Panc1 (cell line): ENCODE measurements at regions of chr17 and their contacts with region 1.

Region 1: DNA sequence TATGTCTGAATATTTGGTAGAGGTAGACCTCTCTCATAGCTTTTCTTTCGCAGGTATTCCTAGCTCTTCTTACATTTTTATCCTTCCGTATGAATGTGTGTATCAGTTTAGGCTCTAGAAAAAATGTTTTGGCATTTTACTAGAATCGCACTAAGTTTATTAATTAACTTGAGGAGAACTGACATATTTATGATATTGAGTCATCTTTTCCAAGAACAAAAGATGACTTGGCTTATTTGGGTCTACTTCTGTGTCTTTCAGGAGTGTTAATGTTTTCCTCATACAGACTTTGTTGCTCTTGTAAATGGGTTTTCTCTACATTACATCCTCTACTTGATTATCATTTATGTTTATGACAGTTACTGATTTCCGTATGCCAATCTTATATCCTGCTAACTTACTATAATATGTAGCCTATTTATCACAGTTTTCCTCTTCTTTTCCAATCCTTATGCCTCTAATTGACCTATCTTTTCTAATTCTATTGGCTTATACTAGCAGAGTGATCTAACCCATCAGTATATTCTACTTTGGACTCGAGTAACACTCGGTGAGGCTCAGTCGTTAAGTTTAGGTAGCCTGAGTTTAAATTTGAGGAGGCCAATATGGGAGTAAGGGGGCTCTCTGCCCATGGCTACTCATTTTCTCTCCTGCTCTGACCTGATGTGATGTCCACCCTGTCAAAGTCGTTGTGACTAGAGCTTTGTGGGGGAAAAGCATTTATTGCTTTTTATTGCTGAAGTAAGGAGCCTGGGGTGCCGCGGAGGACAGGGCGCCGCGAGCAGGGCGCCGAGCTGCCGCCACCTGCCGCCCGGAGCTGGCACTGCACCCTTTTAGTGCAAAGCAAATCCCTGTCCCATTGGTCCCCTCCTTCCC is 20.0 kb downstream of the ST6GALNAC1 start:
- DNase-seq: peak; percentile 30
- ATAC-seq: peak; percentile 96
- H3K4me3 ChIP-seq: peak overlapping the region in 1 of 2 experiments; percentile 29; a peak in 1 of 4 replicates
- H3K27ac ChIP-seq: peak overlapping the region; percentile 70; the same call in 1 of the 2 replicates
- H3K4me1 ChIP-seq: peaks cover 3% of the 10 kb centered on the region; the same call in 1 of the 2 replicates
- H3K27me3 ChIP-seq: no peaks in the 10 kb centered on the region; the same call in 1 of the 2 replicates
- CTCF ChIP-seq: peak; percentile 99

Region 2: GRCh38 chr17:76523084-76524037 is 100.1 kb before region 1 on chr17:
- CTCF ChIA-PET with region 1: no interaction called
- POLR2A ChIA-PET with region 1: interaction called, 3 read pairs
- in situ Hi-C with region 1: no loop called
- intact Hi-C with region 1: loop called (anchors 5 kb)
- DNase-seq: peak; percentile 46
- ATAC-seq: peak; percentile 85
- H3K4me3 ChIP-seq: peak overlapping the region in 1 of 2 experiments; percentile 17; a peak in 1 of 4 replicates
- H3K27ac ChIP-seq: no peak overlapping the region
- H3K4me1 ChIP-seq: peaks cover 19% of the 10 kb centered on the region
- H3K27me3 ChIP-seq: no peaks in the 10 kb centered on the region
- CTCF ChIP-seq: peak; percentile 100

Region 3: DNA sequence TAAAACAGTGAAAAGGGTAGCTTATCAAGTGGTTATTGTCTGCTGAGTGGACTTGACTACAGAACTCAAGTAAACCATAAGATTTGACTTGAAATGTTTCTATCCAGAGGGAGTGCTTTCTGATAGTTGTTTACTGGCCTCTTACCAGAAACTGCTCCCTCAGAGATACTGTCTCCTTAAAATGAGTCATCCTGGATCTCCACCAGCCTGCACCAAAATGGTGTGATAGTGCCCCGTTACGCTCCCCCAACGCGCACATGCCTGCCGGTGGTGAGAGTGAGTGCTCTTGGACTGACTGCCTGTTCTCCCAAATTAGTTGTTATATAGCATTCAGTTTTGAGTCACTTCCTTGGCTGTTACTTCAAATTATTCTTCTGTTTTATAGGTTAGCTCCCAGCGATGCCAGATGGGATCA is 60.8 kb before region 1 on chr17:
- CTCF ChIA-PET with region 1: interaction called, 9 read pairs
- POLR2A ChIA-PET with region 1: no interaction called
- in situ Hi-C with region 1: no loop called
- intact Hi-C with region 1: loop called (anchors 10 kb)
- DNase-seq: no peak
- ATAC-seq: no peak
- H3K4me3 ChIP-seq: no peak overlapping the region
- H3K27ac ChIP-seq: peak overlapping the region; percentile 2; the same call in 1 of the 2 replicates
- H3K4me1 ChIP-seq: peaks cover 69% of the 10 kb centered on the region
- H3K27me3 ChIP-seq: no peaks in the 10 kb centered on the region
- CTCF ChIP-seq: no peak

Region 4: GRCh38 chr17:76575570-76575969 is 47.9 kb before region 1 on chr17:
- CTCF ChIA-PET with region 1: no interaction called
- POLR2A ChIA-PET with region 1: no interaction called
- in situ Hi-C with region 1: no loop called
- intact Hi-C with region 1: no loop called
- DNase-seq: no peak
- ATAC-seq: no peak
- H3K4me3 ChIP-seq: no peak overlapping the region
- H3K27ac ChIP-seq: no peak overlapping the region
- H3K4me1 ChIP-seq: peaks cover 3% of the 10 kb centered on the region
- H3K27me3 ChIP-seq: no peaks in the 10 kb centered on the region
- CTCF ChIP-seq: no peak